Heart left ventricle (tissue), 16 donors: ENCODE measurements at regions of chr12 and their contacts with region 1.

Region 1: DNA sequence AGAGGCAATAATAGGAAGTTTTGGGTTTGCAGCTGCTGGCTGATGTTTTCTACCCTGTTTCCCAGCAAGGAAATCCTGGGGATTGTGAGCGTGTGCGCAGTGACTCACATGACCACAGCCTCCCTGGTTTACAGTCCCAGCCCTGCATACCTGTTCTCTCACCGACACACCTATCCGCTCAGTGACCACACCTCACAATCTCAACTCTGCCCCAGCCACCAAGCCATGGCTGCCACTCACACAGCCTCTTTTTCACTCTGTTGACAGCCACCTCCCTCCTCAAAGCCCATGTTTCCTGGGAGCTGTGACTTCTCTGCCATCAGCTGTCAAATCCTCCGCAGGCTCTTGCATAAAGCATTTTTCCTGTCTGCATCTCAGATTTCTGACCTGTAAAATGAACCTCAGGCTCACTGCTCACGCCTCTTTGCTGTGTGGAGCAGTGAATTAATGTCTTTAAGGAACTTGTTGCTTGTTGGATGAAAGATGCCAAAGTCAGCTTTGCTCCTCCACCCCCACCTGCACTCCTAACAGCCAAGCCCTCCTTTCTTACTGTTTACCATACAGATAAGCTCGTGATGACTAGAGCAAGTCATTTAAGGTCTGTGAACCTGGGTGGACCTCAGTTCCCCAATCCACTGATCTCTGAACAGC is 43.5 kb downstream of the B4GALNT3 start:
- DNase-seq: peak in 1 of 5 donors; percentile 38
- ATAC-seq: peak in 3 of 4 donors; percentile 64 to 69 (median 68)
- H3K4me3 ChIP-seq: no peak overlapping the region
- H3K27ac ChIP-seq: peak overlapping the region in 8 of 12 donors; percentile 9 to 68 (median 30)
- H3K4me1 ChIP-seq: peaks cover 0 to 38% (median 14%) of the 10 kb centered on the region in 12 donors
- H3K27me3 ChIP-seq: no peaks in the 10 kb centered on the region
- CTCF ChIP-seq: no peak
- POLR2A ChIP-seq: no peak

Region 2: DNA sequence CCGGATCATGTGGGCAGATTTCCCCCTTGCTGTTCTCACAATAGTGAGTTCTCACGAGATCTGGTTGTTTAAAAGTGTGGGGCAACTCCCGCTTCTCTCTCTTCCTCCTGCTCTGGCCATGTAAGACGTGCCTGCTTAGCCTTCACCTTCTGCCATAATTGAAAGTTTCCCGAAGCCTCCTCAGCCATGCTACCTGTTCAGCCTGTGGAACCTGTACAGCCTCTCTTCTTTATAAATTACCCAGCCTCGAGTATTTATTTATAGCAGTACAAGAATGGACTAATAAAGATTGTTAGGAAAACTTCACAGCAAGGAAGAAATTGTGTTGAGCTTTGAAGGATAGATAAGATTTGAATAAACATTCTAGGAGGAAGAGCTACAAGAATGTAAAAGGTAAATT is 166.2 kb before region 1 on chr12:
- intact Hi-C with region 1: no loop called
- DNase-seq: no peak
- ATAC-seq: no peak
- H3K4me3 ChIP-seq: no peak overlapping the region
- H3K27ac ChIP-seq: no peak overlapping the region
- H3K4me1 ChIP-seq: peaks cover 0 to 5% (median 0%) of the 10 kb centered on the region in 12 donors
- H3K27me3 ChIP-seq: no peaks in the 10 kb centered on the region
- CTCF ChIP-seq: no peak
- POLR2A ChIP-seq: no peak

Region 3: GRCh38 chr12:452667-453210 is 50.5 kb before region 1 on chr12:
- intact Hi-C with region 1: loop called in 6 of 10 experiments (anchors 2 to 10 kb)
- DNase-seq: peak in 3 of 5 donors; percentile 49 to 64 (median 61)
- ATAC-seq: peak in 3 of 4 donors; percentile 19 to 35 (median 32)
- H3K4me3 ChIP-seq: no peak overlapping the region
- H3K27ac ChIP-seq: no peak overlapping the region
- H3K4me1 ChIP-seq: peaks cover 0 to 28% (median 0%) of the 10 kb centered on the region in 12 donors
- H3K27me3 ChIP-seq: peaks cover 0 to 4% (median 0%) of the 10 kb centered on the region in 9 donors
- CTCF ChIP-seq: no peak
- POLR2A ChIP-seq: no peak

Region 4: DNA sequence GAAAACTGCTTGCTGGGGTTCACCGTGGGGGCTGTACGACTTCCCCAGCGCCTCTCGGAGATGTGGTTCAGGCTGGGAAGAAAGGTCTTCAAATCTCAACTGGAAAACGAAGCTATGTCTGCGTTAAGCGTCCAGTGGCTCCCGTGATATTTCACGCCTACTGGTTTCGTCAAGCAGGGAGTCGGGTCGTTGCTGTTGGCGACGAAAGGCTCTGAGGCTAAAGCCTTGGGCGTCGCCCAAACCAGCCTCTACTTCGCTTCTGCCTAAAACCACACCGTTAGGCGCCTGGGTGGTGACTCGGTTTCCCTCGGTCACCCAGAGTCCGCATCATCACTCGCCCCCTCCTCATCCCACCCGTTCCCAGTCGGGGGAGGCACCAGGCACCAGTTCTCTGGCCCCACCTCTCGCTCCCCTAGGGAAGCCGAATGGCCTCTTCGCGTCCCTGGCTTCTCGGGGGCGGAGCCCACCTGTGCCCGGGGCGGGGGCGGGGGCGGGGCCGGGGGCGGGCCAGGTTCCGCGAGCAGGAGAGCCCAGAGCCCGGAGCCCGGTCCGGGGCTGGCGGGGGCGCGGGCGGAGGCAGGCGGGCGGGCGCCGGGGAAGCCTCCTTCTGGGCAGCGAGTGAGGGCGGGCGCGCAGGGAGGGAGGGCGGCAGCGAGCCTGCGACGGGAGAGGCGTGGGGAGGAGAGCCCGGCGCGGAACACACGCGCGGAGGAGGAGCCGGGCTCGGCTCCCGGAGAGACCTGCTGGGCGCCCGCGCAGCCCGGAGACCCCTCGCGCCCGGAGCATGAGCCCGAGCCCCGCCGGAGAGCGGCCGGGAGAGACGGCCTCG is 43.6 kb before region 1 on chr12 and contains the start of gene B4GALNT3:
- intact Hi-C with region 1: loop called in 6 of 10 experiments (anchors 5 to 10 kb)
- DNase-seq: peak; percentile 50 to 77 (median 65)
- ATAC-seq: peak; percentile 21 to 80 (median 67)
- H3K4me3 ChIP-seq: peak within 1 kb of the TSS; percentile 53 to 79 (median 64)
- H3K27ac ChIP-seq: peak within 1 kb of the TSS; percentile 18 to 86 (median 76)
- H3K4me1 ChIP-seq: peaks cover 0 to 60% (median 14%) of the 10 kb centered on the region in 12 donors
- H3K27me3 ChIP-seq: peaks cover 0 to 62% (median 0%) of the 10 kb centered on the region in 9 donors
- CTCF ChIP-seq: no peak
- POLR2A ChIP-seq: peak in 1 of 2 donors; percentile 69
- total RNA-seq, gene B4GALNT3: 19.3 to 59.4 (median 31.5) TPM

Region 5: DNA sequence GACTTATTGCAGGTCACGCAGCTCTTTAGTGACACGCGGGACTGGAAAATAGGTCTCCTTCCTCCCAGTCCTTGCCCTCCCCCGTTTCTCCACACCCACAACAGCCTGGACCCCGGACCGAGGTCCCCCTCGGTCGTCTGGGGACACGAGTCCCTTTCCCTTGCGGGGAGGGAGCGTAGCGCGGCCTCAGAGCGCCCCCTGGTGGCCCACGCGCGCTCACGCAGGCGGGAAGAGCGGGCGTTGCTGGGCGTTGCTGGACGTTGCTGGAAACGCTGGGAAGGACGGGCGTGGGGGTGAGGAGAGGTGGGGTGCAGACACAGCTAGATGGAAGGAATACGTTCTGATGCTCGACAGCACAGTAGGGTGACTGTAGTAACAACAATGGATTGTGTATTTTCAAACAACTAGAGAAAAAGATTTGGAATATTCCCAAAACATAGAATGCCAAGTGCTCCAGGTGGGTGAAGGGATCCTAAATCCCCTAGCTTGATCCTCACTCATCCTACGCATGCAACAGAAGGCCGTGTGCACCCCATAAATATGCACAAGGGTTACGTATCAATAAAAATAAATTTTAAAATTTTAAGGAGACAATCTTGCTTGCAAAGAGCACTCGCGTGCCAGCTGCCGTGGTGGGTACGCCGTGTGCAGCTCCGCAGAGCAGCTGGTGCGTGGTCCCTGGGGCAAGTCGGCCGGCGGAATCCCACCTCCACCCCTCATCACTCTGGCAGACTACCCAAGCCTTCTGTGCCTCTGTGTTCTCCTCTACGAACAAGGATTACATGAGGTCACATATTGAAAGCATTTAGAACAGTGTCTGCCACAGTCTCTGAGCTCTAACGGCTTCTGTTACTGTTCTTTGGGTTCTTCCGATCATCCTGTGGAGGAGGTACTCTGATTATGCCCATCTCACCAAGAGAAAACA is 43.9 kb after region 1 on chr12:
- intact Hi-C with region 1: loop called in 6 of 10 experiments (anchors 5 to 10 kb)
- DNase-seq: peak; percentile 66 to 85 (median 71)
- ATAC-seq: peak in 3 of 4 donors; percentile 47 to 58 (median 50)
- H3K4me3 ChIP-seq: no peak overlapping the region
- H3K27ac ChIP-seq: peak overlapping the region in 5 of 12 donors; percentile 3 to 83 (median 26)
- H3K4me1 ChIP-seq: peaks cover 0 to 59% (median 21%) of the 10 kb centered on the region in 12 donors
- H3K27me3 ChIP-seq: peaks cover 0 to 13% (median 6%) of the 10 kb centered on the region in 9 donors
- CTCF ChIP-seq: peak; percentile 94 to 98 (median 97)
- POLR2A ChIP-seq: no peak